ENCODE measurements at regions of chr6 and their contacts with region 1.

Region 1: GRCh38 chr6:148578245-148578732 is 168.5 kb upstream of the UST start:
- DNase-seq: peak; percentile 85
- ATAC-seq: peak; percentile 100
- H3K4me3 Mint-ChIP-seq: no peak overlapping the region
- H3K27ac Mint-ChIP-seq: no peak overlapping the region
- H3K4me1 Mint-ChIP-seq: peaks cover 33% of the 10 kb centered on the region
- H3K27me3 Mint-ChIP-seq: peaks cover 6% of the 10 kb centered on the region; the same call in 1 of the 2 replicates
- CTCF ChIP-seq: no peak

Region 2: GRCh38 chr6:148414836-148415235 is 163.5 kb before region 1 on chr6:
- CTCF ChIA-PET with region 1: no interaction called
- POLR2A ChIA-PET with region 1: no interaction called
- DNase-seq: no peak
- ATAC-seq: no peak
- H3K4me3 Mint-ChIP-seq: no peak overlapping the region
- H3K27ac Mint-ChIP-seq: no peak overlapping the region
- H3K4me1 Mint-ChIP-seq: peaks cover 23% of the 10 kb centered on the region
- H3K27me3 Mint-ChIP-seq: no peaks in the 10 kb centered on the region
- CTCF ChIP-seq: no peak

Region 3: DNA sequence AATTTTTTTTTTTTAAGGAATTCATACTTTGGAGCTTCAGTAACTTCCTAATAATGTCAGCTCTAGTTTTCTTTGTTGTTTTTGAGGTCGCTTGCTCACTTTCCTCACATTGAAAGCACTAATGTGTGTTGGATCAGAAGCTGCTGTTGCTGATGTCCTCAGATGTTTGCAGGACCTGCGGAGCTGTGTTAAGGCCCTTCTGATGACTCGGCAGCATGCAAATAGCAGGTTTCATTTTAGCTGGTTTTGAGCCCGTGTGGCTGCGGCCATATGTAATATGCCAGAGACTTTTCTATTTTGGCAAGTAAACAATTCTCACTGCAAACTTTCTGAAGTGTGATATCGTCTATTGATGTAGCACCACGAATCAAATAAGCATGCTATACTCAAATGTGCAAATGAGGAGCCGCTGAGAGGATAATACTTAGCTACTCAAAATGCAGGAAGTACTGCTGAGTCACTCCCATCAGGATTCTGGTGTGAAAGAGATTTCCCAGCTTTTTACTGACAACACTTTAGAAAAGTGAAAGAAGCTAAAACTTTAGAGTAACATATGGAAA is 47.8 kb before region 1 on chr6:
- CTCF ChIA-PET with region 1: no interaction called
- POLR2A ChIA-PET with region 1: no interaction called
- DNase-seq: no peak
- ATAC-seq: peak; percentile 70
- H3K4me3 Mint-ChIP-seq: no peak overlapping the region
- H3K27ac Mint-ChIP-seq: peak overlapping the region; percentile 86
- H3K4me1 Mint-ChIP-seq: peaks cover 25% of the 10 kb centered on the region
- H3K27me3 Mint-ChIP-seq: no peaks in the 10 kb centered on the region
- CTCF ChIP-seq: no peak

Region 4: DNA sequence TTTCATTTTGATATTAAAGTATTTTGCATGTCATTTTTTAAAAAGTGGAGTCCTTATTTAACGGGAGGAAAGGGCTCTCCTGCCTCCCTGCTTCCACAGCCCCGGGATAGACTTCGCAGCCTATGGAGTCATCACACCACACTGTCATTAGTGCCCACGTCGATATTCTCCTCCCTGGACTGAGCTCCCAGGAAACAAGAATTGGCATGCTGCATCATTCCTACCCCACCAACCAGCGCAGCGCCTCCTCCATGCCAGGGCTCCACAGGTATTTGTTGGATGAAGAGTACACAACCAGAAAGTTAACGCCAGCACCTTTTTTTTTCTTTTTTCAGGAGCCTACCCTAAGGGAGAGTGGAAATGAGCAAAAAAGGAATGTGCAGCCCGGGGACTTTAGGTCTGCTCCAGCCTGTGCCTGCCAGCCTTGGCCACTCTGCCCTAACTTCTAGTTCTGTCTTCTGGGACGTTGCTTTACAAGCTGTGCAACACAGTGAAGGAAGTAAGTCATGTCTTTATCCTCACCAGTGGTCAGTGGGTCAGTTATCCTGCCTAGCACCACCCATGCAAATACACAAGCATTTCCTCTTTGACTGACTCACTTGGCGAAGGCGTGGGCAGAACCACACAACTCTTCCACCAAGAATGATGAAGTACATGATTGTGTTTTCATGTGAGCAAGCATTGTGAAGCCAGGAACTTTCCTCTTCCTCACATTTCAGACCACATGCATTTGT is 12.2 kb before region 1 on chr6:
- CTCF ChIA-PET with region 1: interaction called, 10 read pairs
- POLR2A ChIA-PET with region 1: no interaction called
- DNase-seq: no peak
- ATAC-seq: no peak
- H3K4me3 Mint-ChIP-seq: no peak overlapping the region
- H3K27ac Mint-ChIP-seq: peak overlapping the region; percentile 28; the same call in 1 of the 2 replicates
- H3K4me1 Mint-ChIP-seq: no peaks in the 10 kb centered on the region
- H3K27me3 Mint-ChIP-seq: peaks cover 6% of the 10 kb centered on the region
- CTCF ChIP-seq: no peak

Region 5: DNA sequence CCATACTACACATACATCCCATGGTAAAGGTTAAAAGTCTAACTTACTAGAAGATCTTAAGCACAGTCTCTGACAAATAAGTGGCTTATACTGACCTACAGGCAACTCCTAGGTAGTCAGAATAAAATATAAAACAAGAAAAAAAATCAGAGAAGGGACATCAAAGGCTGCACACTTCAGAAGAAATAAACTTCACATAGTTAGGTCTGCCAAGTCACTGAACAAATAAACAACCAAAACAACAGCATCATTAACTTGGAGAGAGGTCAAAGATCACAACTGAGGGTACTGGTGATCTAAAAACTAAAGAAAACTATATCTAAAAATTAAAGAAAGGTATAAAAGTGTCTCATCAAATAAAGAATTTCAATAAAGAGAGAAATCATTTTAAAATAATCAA is 80.4 kb after region 1 on chr6:
- CTCF ChIA-PET with region 1: no interaction called
- POLR2A ChIA-PET with region 1: no interaction called
- DNase-seq: no peak
- ATAC-seq: no peak
- H3K4me3 Mint-ChIP-seq: no peak overlapping the region
- H3K27ac Mint-ChIP-seq: no peak overlapping the region
- H3K4me1 Mint-ChIP-seq: no peaks in the 10 kb centered on the region
- H3K27me3 Mint-ChIP-seq: no peaks in the 10 kb centered on the region
- CTCF ChIP-seq: no peak

Region 6: DNA sequence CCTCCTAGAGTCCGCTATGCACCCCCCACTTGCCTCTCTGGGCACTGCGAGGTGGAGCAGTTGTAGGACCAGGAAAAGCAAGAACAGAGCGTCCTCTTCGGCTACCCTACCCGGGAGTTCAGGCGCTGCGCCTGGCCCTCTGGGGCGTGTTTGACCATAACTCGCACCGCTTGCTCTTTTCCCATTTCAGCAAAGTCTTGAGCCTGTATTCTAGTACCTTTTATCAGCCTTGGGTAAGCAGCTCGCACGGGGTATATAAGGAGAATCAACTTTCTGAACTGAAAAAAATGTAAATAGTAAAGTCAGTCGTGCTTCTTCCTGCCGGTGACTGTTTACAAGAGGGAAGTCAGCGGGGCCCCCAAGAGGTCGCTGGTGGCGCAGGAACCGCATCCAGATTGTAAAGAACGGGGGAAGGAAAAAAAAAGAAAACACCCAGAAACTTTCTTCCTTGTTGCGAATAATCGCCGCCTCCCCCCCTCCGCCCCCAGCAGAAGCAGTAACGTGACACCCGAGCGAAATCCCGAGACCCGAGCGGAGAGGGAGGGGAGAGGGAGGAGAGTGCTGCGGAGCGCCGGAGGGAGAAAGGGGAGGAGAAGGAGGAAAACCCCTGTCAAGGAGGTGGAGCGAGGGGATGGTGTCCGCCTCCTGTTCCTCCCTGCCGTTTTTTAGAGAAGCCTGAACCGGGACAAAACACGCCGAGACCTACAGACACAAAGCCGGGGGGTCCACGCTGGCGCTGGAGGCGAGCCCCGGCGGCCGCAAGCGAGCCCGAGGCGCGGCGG is 168.3 kb after region 1 on chr6 and contains the start of gene UST:
- CTCF ChIA-PET with region 1: interaction called, 12 read pairs
- POLR2A ChIA-PET with region 1: no interaction called
- DNase-seq: peak; percentile 89
- ATAC-seq: peak; percentile 86
- H3K4me3 Mint-ChIP-seq: peak within 1 kb of the TSS; percentile 93
- H3K27ac Mint-ChIP-seq: peak within 1 kb of the TSS; percentile 93
- H3K4me1 Mint-ChIP-seq: peaks cover 57% of the 10 kb centered on the region
- H3K27me3 Mint-ChIP-seq: peaks cover under 1% of the 10 kb centered on the region
- CTCF ChIP-seq: no peak
- total RNA-seq, gene UST: 32.1 to 33.8 TPM (median 33.8 TPM) in 3 replicates

Region 7: DNA sequence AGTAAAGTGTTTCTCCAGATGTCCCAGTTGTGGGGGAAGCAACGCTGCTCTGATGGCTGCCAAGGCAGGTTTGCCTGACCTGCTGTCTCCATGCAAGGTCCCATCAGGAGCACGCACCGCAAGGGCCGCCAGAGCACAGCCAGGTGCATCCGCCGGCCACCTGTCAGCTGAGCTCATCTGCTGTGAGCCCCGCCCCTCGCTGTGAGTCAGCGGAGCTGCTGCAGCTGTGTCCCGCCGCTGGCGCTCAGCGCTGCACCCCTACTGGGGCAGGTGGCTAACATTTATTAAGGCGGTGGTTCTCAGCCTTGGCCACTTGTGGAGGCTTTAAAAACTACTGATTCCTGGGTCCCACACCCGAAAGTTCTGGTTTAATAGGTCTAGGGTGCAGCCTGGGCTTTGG is 394.2 kb after region 1 on chr6:
- CTCF ChIA-PET with region 1: interaction called, 40 read pairs
- POLR2A ChIA-PET with region 1: no interaction called
- DNase-seq: peak; percentile 95
- ATAC-seq: peak; percentile 93
- H3K4me3 Mint-ChIP-seq: peak overlapping the region; percentile 1; the same call in 1 of the 2 replicates
- H3K27ac Mint-ChIP-seq: peak overlapping the region; percentile 88
- H3K4me1 Mint-ChIP-seq: peaks cover 73% of the 10 kb centered on the region
- H3K27me3 Mint-ChIP-seq: no peaks in the 10 kb centered on the region
- CTCF ChIP-seq: no peak

Region 8: GRCh38 chr6:149082286-149082707 is 504.0 kb after region 1 on chr6:
- CTCF ChIA-PET with region 1: interaction called, 16 read pairs
- POLR2A ChIA-PET with region 1: no interaction called
- DNase-seq: peak; percentile 81
- ATAC-seq: peak; percentile 91
- H3K4me3 Mint-ChIP-seq: no peak overlapping the region
- H3K27ac Mint-ChIP-seq: no peak overlapping the region
- H3K4me1 Mint-ChIP-seq: peaks cover 22% of the 10 kb centered on the region
- H3K27me3 Mint-ChIP-seq: no peaks in the 10 kb centered on the region
- CTCF ChIP-seq: peak; percentile 69